ENCODE measurements at regions of chr21 and their contacts with region 1.

Region 1: GRCh38 chr21:33205476-33205875 is 24.3 kb upstream of the IFNAR2 start:
- DNase-seq: no peak
- ATAC-seq: peak; percentile 7
- H3K4me3 Mint-ChIP-seq: peak overlapping the region; percentile 6
- H3K27ac Mint-ChIP-seq: peak overlapping the region; percentile 90
- H3K4me1 Mint-ChIP-seq: peaks cover 36% of the 10 kb centered on the region
- H3K27me3 Mint-ChIP-seq: no peaks in the 10 kb centered on the region

Region 2: DNA sequence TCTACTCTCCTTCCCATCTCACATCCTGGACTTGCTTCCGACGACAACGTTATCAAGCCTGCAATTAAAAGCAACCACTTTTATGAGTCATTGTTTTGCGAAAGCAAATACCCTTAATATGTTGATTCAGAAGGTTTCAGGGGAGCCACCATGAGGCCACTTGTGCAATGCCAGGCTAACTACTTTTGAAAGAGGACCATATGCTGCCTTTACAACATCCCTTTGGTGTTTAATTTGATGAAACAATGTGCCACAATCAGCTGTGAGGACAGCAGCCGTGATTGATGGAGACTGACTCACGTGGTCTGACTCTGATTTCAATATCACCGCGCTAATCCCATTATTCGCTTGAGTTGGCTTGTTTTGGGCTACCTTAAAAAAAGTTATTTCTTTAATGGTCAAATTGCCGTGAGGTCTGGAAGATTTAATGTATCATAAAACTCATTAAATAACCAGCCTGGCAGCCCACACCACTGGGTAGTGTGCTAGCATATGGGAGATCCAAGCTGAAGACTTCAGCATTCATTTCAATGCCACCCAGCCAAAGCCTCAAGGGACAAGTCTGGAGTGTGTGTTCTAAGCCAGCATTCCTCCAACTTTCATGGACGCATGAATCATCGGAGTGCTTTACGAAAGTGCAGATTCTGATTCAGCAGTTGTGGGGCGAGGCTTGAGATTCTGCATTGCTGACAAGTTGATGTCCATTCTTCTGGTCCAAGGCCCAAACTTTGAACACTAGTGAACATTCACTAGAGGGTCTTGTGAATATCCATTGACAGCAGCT is 360.6 kb before region 1 on chr21:
- CTCF ChIA-PET with region 1: no interaction called
- POLR2A ChIA-PET with region 1: no interaction called
- intact Hi-C with region 1: no loop called
- DNase-seq: no peak
- ATAC-seq: no peak
- H3K4me3 Mint-ChIP-seq: no peak overlapping the region
- H3K27ac Mint-ChIP-seq: no peak overlapping the region
- H3K4me1 Mint-ChIP-seq: no peaks in the 10 kb centered on the region
- H3K27me3 Mint-ChIP-seq: peaks cover 8% of the 10 kb centered on the region

Region 3: GRCh38 chr21:33089398-33090119 is 115.9 kb before region 1 on chr21:
- CTCF ChIA-PET with region 1: no interaction called
- POLR2A ChIA-PET with region 1: no interaction called
- intact Hi-C with region 1: no loop called
- DNase-seq: no peak
- ATAC-seq: no peak
- H3K4me3 Mint-ChIP-seq: no peak overlapping the region
- H3K27ac Mint-ChIP-seq: no peak overlapping the region
- H3K4me1 Mint-ChIP-seq: no peaks in the 10 kb centered on the region
- H3K27me3 Mint-ChIP-seq: peaks cover 3% of the 10 kb centered on the region

Region 4: GRCh38 chr21:33169359-33169758 is 36.1 kb before region 1 on chr21:
- CTCF ChIA-PET with region 1: no interaction called
- POLR2A ChIA-PET with region 1: no interaction called
- intact Hi-C with region 1: no loop called
- DNase-seq: no peak
- ATAC-seq: no peak
- H3K4me3 Mint-ChIP-seq: no peak overlapping the region
- H3K27ac Mint-ChIP-seq: no peak overlapping the region
- H3K4me1 Mint-ChIP-seq: no peaks in the 10 kb centered on the region
- H3K27me3 Mint-ChIP-seq: peaks cover 5% of the 10 kb centered on the region

Region 5: DNA sequence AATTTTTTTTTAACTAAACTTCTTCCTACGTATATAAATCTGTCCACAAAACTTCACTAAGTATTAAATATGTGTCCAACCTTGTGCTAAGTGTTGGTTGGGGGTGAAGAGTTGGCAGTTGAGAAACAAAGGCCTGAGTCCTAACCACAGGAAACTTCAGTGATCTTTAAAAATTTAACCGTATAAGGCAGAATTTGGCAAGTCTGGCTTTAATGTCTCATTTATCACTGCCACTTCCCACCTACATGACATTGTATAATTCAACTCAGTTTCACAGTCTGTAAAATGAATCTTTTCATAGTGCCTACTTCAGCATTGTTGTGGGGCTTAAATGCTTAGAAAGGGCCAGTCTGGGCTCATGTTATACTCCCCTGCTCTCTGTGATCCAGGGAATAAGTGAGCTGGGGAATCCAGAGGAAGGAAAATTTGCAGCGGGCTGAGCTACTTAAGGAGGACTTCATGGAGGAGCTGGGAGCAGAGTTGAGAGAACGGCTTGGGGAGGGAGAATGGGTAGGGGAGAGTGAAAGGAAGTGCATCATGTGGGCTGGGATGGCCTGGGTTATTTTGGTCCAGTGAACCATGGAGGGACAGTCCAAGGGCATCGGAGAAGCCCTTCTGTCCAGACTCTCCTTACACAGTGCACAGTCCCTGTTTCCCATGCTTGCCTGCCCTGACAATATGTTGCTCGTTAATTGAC is 38.8 kb after region 1 on chr21:
- CTCF ChIA-PET with region 1: no interaction called
- POLR2A ChIA-PET with region 1: no interaction called
- intact Hi-C with region 1: loop called in 1 of 2 experiments (anchors 5 kb)
- DNase-seq: no peak
- ATAC-seq: peak; percentile 63
- H3K4me3 Mint-ChIP-seq: peak overlapping the region; percentile 37
- H3K27ac Mint-ChIP-seq: peak overlapping the region; percentile 89
- H3K4me1 Mint-ChIP-seq: peaks cover 87% of the 10 kb centered on the region
- H3K27me3 Mint-ChIP-seq: no peaks in the 10 kb centered on the region

Region 6: DNA sequence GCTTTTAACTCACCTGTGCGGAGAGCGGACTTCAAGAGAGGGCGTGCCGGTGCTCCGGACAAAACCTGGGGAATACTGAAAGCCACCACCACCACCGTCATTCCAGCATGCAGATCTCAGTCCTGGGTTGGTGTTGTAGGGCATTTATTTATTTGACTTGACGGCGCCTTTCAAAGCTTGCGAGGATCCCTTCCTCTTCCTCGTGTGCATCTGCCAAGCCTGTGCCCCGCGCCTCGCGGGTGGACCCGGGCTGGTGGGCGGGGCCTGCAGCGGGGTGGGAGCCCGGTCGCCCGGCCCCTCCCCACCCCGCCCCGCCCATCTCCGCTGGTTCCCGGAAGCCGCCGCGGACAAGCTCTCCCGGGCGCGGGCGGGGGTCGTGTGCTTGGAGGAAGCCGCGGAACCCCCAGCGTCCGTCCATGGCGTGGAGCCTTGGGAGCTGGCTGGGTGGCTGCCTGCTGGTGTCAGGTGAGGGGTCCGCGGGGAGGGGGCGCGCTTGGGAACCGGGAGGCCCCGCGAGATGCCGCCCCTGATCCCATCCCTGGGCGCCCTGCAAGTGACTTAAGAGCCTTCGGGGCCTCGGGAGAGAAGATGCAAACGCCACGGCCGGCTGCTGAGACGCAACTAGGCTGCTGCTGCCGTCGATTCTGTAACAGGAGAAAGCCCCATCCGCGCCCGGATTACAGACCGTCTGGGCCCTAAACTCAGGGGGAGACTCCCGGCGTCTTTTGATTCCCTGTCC is 60.7 kb after region 1 on chr21 and contains the start of gene IL10RB:
- CTCF ChIA-PET with region 1: interaction called, 4 read pairs
- POLR2A ChIA-PET with region 1: no interaction called
- intact Hi-C with region 1: loop called (anchors 2 to 5 kb)
- DNase-seq: peak; percentile 84
- ATAC-seq: peak; percentile 64
- H3K4me3 Mint-ChIP-seq: peak within 1 kb of the TSS; percentile 90
- H3K27ac Mint-ChIP-seq: peak within 1 kb of the TSS; percentile 92
- H3K4me1 Mint-ChIP-seq: peaks cover 42% of the 10 kb centered on the region
- H3K27me3 Mint-ChIP-seq: no peaks in the 10 kb centered on the region
- total RNA-seq, gene IL10RB: 22.8 to 25.0 TPM

Region 7: GRCh38 chr21:33317145-33317544 is 111.7 kb after region 1 on chr21:
- CTCF ChIA-PET with region 1: no interaction called
- POLR2A ChIA-PET with region 1: no interaction called
- intact Hi-C with region 1: no loop called
- DNase-seq: no peak
- ATAC-seq: no peak
- H3K4me3 Mint-ChIP-seq: no peak overlapping the region
- H3K27ac Mint-ChIP-seq: no peak overlapping the region
- H3K4me1 Mint-ChIP-seq: no peaks in the 10 kb centered on the region
- H3K27me3 Mint-ChIP-seq: no peaks in the 10 kb centered on the region